ENCODE measurements at regions of chr5 and their contacts with region 1.

Region 1: GRCh38 chr5:107979900-107980299 is 309.2 kb upstream of the EFNA5 start:
- DNase-seq: no peak

Region 2: GRCh38 chr5:108606185-108606584 is 626.3 kb after region 1 on chr5:
- intact Hi-C with region 1: loop called in 1 of 2 experiments (anchors 5 kb)
- DNase-seq: no peak

Measured in posterior vena cava (tissue), 2 donors.